WTC11 (cell line): ENCODE measurements at regions of chr1 and their contacts with region 1.

Region 1: GRCh38 chr1:183484254-183484653 is 12.0 kb downstream of the SMG7 start:
- DNase-seq: no peak
- ATAC-seq: peak; percentile 43
- H3K4me3 Mint-ChIP-seq: no peak overlapping the region
- H3K27ac Mint-ChIP-seq: no peak overlapping the region
- H3K4me1 Mint-ChIP-seq: peaks cover 46% of the 10 kb centered on the region
- H3K27me3 Mint-ChIP-seq: no peaks in the 10 kb centered on the region
- CTCF ChIP-seq: no peak

Region 2: GRCh38 chr1:183227963-183228649 is 256.1 kb before region 1 on chr1:
- CTCF ChIA-PET with region 1: no interaction called
- POLR2A ChIA-PET with region 1: no interaction called
- DNase-seq: peak; percentile 85
- ATAC-seq: peak; percentile 95
- H3K4me3 Mint-ChIP-seq: no peak overlapping the region
- H3K27ac Mint-ChIP-seq: no peak overlapping the region
- H3K4me1 Mint-ChIP-seq: peaks cover 26% of the 10 kb centered on the region
- H3K27me3 Mint-ChIP-seq: no peaks in the 10 kb centered on the region
- CTCF ChIP-seq: peak; percentile 60

Region 3: DNA sequence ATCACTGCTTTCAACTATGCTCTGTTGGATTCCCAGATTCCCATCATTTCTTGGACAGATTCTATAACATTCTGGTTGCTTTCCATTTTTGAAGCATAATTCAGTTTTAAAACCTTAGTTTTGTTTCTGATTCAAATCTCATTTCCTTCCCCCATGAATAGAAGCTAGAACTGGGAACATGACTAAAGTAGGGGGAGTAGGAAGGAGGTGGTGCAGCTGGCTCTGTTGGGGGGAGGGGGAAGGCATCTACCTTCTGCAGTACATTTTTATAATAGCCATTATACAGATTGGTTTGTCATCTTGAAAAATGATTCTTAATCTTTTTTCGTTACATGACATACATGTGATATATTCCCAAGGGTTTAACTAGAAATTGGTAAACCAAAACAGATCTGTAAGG is 36.1 kb after region 1 on chr1:
- CTCF ChIA-PET with region 1: no interaction called
- POLR2A ChIA-PET with region 1: interaction called, 10 read pairs
- DNase-seq: no peak
- ATAC-seq: no peak
- H3K4me3 Mint-ChIP-seq: no peak overlapping the region
- H3K27ac Mint-ChIP-seq: no peak overlapping the region
- H3K4me1 Mint-ChIP-seq: no peaks in the 10 kb centered on the region
- H3K27me3 Mint-ChIP-seq: no peaks in the 10 kb centered on the region
- CTCF ChIP-seq: no peak

Region 4: DNA sequence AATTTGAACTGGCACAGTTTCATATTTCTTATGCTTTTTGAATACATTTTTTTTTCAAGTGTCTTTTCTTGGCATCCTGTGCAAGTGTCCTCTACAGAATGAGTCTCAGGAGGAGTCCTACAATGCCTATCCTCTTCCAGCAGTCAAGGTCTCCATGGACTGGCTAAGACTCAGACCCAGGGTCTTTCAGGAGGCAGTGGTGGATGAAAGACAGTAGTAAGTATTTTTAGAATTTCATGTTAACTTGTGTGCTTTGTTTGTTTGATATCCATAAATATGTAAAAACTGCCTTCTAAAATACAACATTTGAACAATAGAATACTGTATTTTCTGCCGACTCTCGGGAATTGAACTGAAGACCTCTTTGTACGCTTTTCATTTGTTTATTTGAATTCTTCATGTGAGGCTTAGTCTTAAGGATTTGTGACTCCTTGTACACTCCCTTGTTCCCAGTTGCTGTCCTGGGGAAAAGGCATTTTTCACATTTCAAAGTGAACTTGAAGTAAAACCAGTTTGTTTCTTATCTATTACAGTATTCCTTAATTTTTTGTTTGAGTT is 49.4 kb after region 1 on chr1:
- CTCF ChIA-PET with region 1: no interaction called
- POLR2A ChIA-PET with region 1: no interaction called
- DNase-seq: no peak
- ATAC-seq: no peak
- H3K4me3 Mint-ChIP-seq: no peak overlapping the region
- H3K27ac Mint-ChIP-seq: no peak overlapping the region; the same call in 1 of the 2 replicates
- H3K4me1 Mint-ChIP-seq: no peaks in the 10 kb centered on the region
- H3K27me3 Mint-ChIP-seq: no peaks in the 10 kb centered on the region
- CTCF ChIP-seq: no peak